Aorta (tissue), 5 donors: ENCODE measurements at regions of chrX and their contacts with region 1.

Region 1: GRCh38 chrX:148836741-148837140 is 336.3 kb downstream of the AFF2 start:
- DNase-seq: no peak
- ATAC-seq: no peak
- H3K4me3 ChIP-seq: no peak overlapping the region
- H3K27ac ChIP-seq: no peak overlapping the region
- H3K4me1 ChIP-seq: no peaks in the 10 kb centered on the region
- H3K27me3 ChIP-seq: no peaks in the 10 kb centered on the region

Region 2: GRCh38 chrX:148825686-148826085 is 11.1 kb before region 1 on chrX:
- intact Hi-C with region 1: loop called in 1 of 2 experiments (anchors 1 kb)
- DNase-seq: no peak
- ATAC-seq: no peak
- H3K4me3 ChIP-seq: no peak overlapping the region
- H3K27ac ChIP-seq: no peak overlapping the region
- H3K4me1 ChIP-seq: no peaks in the 10 kb centered on the region
- H3K27me3 ChIP-seq: no peaks in the 10 kb centered on the region

Region 3: GRCh38 chrX:148878351-148878750 is 41.6 kb after region 1 on chrX:
- intact Hi-C with region 1: no loop called
- DNase-seq: no peak
- ATAC-seq: no peak
- H3K4me3 ChIP-seq: no peak overlapping the region
- H3K27ac ChIP-seq: no peak overlapping the region
- H3K4me1 ChIP-seq: no peaks in the 10 kb centered on the region
- H3K27me3 ChIP-seq: no peaks in the 10 kb centered on the region